Panc1 (cell line): ENCODE measurements at regions of chr10 and their contacts with region 1.

Region 1: DNA sequence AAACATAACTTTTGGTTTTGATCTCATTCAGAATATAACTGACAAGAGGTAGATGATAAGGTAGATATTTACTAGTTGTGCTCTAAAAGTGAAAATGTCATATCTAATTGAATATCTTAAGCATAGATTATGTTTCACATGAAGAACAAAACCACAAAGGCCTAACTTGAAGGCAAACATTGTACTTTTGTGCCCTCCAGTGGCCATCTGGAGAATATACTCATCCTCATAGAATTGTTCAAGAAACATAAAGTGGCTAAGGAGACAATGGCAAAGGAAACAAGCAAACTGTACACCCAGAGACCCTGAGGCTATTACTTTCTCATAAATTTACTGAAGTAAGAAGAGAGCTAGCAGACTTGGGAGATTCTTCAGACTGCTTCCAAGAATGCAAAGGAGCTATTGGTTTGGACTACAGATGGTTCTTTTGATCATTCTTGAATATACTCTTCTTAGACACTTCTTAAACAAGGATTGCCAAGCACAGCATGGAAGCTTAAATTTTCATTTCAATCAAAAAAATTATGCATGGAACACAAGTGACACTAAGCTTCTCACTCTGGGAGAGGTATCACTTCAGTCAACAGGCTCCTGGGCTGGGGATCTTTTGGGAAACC is 98.2 kb upstream of the DKK1 start:
- DNase-seq: peak; percentile 65
- ATAC-seq: peak; percentile 92
- H3K4me3 ChIP-seq: no peak overlapping the region
- H3K27ac ChIP-seq: peak overlapping the region; percentile 40; the same call in 1 of the 2 replicates
- H3K4me1 ChIP-seq: peaks cover 13% of the 10 kb centered on the region
- H3K27me3 ChIP-seq: no peaks in the 10 kb centered on the region
- CTCF ChIP-seq: peak; percentile 77; the same call in 1 of the 2 replicates

Region 2: DNA sequence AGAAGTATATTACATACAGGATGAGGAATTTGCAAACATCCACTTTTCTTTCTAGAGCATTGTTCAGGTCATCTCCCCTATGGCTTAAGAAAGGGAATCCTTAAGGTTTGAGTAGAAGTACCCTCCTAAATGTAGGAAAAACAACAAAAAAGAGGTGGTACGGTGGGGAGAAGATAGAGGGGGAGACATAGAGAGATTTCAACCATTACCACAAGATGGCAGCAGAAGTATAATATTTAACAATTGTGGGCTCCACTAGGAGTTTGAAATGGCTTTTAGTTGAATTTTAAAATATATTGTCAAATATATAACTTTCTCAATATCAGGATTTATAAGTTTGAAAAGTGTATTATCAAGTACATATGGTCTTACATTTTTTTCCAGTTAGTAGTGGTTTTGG is 1214.3 kb before region 1 on chr10:
- CTCF ChIA-PET with region 1: no interaction called
- POLR2A ChIA-PET with region 1: no interaction called
- in situ Hi-C with region 1: no loop called
- intact Hi-C with region 1: loop called (anchors 5 kb)
- DNase-seq: no peak
- ATAC-seq: peak; percentile 78; the same call in 1 of the 2 replicates
- H3K4me3 ChIP-seq: no peak overlapping the region
- H3K27ac ChIP-seq: no peak overlapping the region
- H3K4me1 ChIP-seq: no peaks in the 10 kb centered on the region
- H3K27me3 ChIP-seq: peaks cover 34% of the 10 kb centered on the region
- CTCF ChIP-seq: peak; percentile 73; the same call in 1 of the 2 replicates

Region 3: DNA sequence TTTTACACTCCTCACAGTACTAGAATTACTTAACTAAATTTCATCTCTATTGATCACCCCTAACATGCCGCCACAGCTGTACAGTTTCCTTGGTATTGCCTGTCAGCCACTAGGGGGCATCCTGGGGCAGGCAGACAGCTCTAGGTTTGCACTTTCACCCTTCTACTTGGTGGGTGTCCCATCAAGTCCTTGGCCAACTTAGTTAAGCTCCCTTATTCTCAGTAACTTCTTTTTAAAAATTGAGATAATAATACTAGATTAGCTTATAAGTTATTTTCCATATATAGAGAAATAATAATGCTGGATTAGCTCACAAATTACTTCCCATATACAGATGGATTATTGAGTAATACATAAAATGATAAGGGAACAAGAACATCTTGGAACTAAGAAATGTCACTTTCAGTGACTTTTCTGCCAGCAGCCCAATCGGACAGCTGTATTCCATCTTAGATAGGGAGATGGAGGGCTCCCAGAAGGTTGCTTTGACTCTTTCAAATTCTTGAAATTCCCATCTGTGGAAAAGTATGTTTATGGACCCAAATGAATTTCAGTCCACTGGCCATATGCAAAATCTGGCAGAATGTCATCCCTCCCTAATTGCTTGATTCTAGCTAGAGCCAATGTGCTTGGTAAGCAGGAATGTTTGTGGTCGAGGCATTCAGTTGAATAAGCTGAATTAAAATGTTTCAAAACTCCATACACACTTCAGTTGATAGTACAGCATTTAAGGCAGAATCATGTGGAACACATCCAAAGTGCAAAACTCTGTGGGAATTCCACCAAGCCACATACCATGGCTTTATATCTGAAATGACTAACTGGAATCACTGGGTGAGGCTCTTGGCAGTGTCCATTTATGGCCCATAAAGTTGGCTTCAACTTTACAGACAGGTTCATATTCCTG is 826.2 kb before region 1 on chr10:
- CTCF ChIA-PET with region 1: no interaction called
- POLR2A ChIA-PET with region 1: no interaction called
- in situ Hi-C with region 1: no loop called
- intact Hi-C with region 1: loop called (anchors 10 kb)
- DNase-seq: peak; percentile 28
- ATAC-seq: no peak
- H3K4me3 ChIP-seq: no peak overlapping the region
- H3K27ac ChIP-seq: no peak overlapping the region
- H3K4me1 ChIP-seq: no peaks in the 10 kb centered on the region
- H3K27me3 ChIP-seq: no peaks in the 10 kb centered on the region
- CTCF ChIP-seq: peak; percentile 87

Region 4: DNA sequence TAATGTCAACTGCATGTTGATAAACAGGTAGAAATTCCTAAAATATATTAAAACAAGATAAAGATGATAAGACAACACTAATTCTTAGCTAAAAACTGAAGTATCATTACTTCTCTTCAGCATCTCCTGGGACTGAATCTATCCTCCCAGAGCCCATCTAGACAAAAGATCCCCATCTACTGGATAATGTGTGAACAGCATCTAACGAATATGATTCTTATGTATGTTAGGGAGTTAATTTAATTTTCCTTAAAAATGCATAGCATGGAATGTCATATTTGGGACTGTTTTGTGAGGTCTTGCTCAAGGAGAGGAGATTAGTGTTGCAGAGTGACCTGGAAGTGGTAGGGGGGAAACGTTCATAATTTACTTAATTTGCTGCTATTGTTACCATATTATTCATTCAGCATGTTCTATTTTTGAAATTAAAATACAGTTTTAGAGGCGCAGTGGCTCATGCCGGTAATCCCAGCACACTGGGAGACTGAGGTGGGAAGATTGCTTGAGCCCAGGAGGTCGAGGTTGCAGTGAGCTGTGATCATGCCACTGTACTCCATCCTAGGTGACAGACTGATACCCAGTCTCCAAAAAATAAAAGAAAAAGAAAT is 211.4 kb before region 1 on chr10:
- CTCF ChIA-PET with region 1: no interaction called
- POLR2A ChIA-PET with region 1: no interaction called
- in situ Hi-C with region 1: no loop called
- intact Hi-C with region 1: loop called (anchors 10 kb)
- DNase-seq: peak; percentile 8
- ATAC-seq: peak; percentile 82
- H3K4me3 ChIP-seq: no peak overlapping the region
- H3K27ac ChIP-seq: no peak overlapping the region
- H3K4me1 ChIP-seq: no peaks in the 10 kb centered on the region
- H3K27me3 ChIP-seq: no peaks in the 10 kb centered on the region; the same call in 1 of the 2 replicates
- CTCF ChIP-seq: peak; percentile 80

Region 5: DNA sequence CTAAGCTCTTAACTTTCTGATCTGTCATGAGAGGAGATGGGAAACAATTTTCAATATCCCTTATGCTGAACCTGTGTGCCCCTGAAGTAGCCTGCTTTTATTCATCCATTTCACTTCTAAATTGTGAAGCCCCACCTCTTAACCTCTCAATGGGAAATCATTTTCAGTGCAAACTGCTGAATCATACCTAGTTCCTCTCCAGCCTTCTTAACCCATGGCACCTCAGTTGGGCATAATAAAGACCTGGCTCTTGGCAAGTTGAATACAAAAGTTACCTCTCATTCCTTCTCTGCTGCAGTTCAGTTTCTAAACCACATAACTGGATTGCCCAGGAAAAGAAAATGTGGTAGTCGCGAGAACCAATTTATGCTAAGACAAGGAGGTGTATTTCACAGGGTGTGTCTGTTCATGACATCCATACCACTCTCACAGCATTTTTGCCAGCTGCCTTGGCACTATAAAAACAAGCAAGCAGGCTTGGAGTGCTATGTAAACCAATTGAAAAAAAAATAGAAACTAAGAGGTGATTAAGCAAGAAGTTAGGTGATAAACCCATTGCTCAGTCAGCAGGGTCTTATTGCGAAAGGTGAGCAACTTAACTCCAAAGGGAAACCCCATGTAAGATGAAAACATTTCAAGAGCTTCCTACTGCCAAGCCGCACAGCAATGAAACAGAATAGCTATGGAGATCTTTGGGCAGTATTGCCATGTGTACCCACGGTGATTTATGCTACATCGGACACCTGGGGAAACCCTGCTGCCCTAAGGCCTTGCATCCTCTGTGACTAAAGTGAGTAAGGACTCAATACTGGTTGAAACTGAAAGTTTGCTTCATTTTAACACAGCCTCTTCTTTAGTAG is 41.2 kb after region 1 on chr10:
- CTCF ChIA-PET with region 1: no interaction called
- POLR2A ChIA-PET with region 1: no interaction called
- in situ Hi-C with region 1: no loop called
- intact Hi-C with region 1: no loop called
- DNase-seq: no peak
- ATAC-seq: no peak
- H3K4me3 ChIP-seq: no peak overlapping the region
- H3K27ac ChIP-seq: no peak overlapping the region
- H3K4me1 ChIP-seq: no peaks in the 10 kb centered on the region
- H3K27me3 ChIP-seq: no peaks in the 10 kb centered on the region
- CTCF ChIP-seq: no peak

Region 6: GRCh38 chr10:52621635-52622079 is 405.8 kb after region 1 on chr10:
- CTCF ChIA-PET with region 1: no interaction called
- POLR2A ChIA-PET with region 1: no interaction called
- in situ Hi-C with region 1: no loop called
- intact Hi-C with region 1: no loop called
- DNase-seq: no peak
- ATAC-seq: no peak
- H3K4me3 ChIP-seq: no peak overlapping the region
- H3K27ac ChIP-seq: peak overlapping the region; percentile 2; the same call in 1 of the 2 replicates
- H3K4me1 ChIP-seq: no peaks in the 10 kb centered on the region
- H3K27me3 ChIP-seq: no peaks in the 10 kb centered on the region
- CTCF ChIP-seq: no peak